ENCODE measurements at regions of chr12 and their contacts with region 1.

Region 1: DNA sequence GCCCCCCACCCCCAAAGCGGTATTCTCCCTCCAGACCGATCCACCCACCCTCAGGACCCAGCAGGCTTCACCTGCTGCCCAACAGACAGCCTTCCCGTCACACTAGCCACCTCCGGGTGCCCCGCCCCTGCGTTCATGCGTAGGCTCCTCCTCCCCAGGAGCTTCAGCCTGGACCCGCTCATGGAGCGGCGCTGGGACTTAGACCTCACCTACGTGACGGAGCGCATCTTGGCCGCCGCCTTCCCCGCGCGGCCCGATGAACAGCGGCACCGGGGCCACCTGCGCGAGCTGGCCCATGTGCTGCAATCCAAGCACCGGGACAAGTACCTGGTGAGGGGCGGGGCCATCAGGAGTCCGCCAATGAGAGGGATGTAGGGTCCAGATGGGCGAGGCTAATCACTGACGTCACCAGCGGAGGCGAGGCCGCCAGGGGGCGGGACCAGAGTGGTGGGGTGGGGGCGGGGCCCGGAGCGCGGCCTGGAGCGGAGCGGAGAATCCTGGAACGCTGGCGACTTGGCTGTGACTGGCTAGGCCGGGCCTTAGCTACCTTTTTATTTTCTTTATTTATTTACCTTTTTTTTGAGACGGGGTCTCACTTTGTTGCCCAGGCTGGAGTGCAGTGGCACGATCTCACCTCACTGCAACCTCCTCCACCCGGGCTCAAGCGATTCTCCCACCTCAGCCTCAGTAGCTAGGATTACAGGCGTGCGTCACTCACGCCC is 4.4 kb downstream of the TNS2 start:
- DNase-seq: peak; percentile 83 to 96 (median 90)
- ATAC-seq: peak; percentile 90 to 93 (median 92)
- H3K4me3 ChIP-seq: peak overlapping the region; percentile 64 to 90
- H3K4me3 Mint-ChIP-seq: peak overlapping the region; percentile 92 to 98 (median 92)
- H3K27ac ChIP-seq: peak overlapping the region; percentile 52
- H3K27ac Mint-ChIP-seq: peak overlapping the region; percentile 87 to 92
- H3K4me1 ChIP-seq: peaks cover 2 to 17% of the 10 kb centered on the region in 2 experiments
- H3K4me1 Mint-ChIP-seq: peaks cover 10 to 15% (median 10%) of the 10 kb centered on the region in 3 donors
- H3K27me3 ChIP-seq: peaks cover 0 to 13% of the 10 kb centered on the region in 2 experiments
- H3K27me3 Mint-ChIP-seq: peaks cover 0 to 2% of the 10 kb centered on the region in 2 donors

Region 2: GRCh38 chr12:51771008-51771407 is 1283.3 kb before region 1 on chr12:
- CTCF ChIA-PET with region 1: no interaction called
- POLR2A ChIA-PET with region 1: no interaction called
- DNase-seq: no peak
- ATAC-seq: no peak
- H3K4me3 ChIP-seq: no peak overlapping the region
- H3K4me3 Mint-ChIP-seq: no peak overlapping the region
- H3K27ac ChIP-seq: no peak overlapping the region
- H3K27ac Mint-ChIP-seq: no peak overlapping the region
- H3K4me1 ChIP-seq: no peaks in the 10 kb centered on the region
- H3K4me1 Mint-ChIP-seq: no peaks in the 10 kb centered on the region
- H3K27me3 ChIP-seq: peaks cover 0 to 8% of the 10 kb centered on the region in 2 experiments
- H3K27me3 Mint-ChIP-seq: peaks cover 0 to 4% of the 10 kb centered on the region in 2 donors

Region 3: GRCh38 chr12:53044052-53044581 is 10.2 kb before region 1 on chr12:
- CTCF ChIA-PET with region 1: interaction called, 3 to 13 read pairs
- POLR2A ChIA-PET with region 1: no interaction called
- DNase-seq: no peak
- ATAC-seq: no peak
- H3K4me3 ChIP-seq: no peak overlapping the region
- H3K4me3 Mint-ChIP-seq: peak overlapping the region in 1 of 3 donors; percentile 91
- H3K27ac ChIP-seq: no peak overlapping the region
- H3K27ac Mint-ChIP-seq: peak overlapping the region in 1 of 2 donors; percentile 37
- H3K4me1 ChIP-seq: peaks cover 6 to 29% of the 10 kb centered on the region in 2 experiments
- H3K4me1 Mint-ChIP-seq: peaks cover 15 to 24% (median 15%) of the 10 kb centered on the region in 3 donors
- H3K27me3 ChIP-seq: peaks cover 0 to 6% of the 10 kb centered on the region in 2 experiments
- H3K27me3 Mint-ChIP-seq: no peaks in the 10 kb centered on the region